Naive thymus-derived CD4-positive, alpha-beta T cell (primary cell): ENCODE measurements at regions of chr5 and their contacts with region 1.

Region 1: GRCh38 chr5:134113902-134114875 is at the start of gene TCF7:
- DNase-seq: peak; percentile 69 to 87 (median 83)
- ATAC-seq: peak; percentile 89
- H3K4me3 ChIP-seq: peak within 1 kb of the TSS; percentile 93
- H3K4me3 Mint-ChIP-seq: peak within 1 kb of the TSS; percentile 93 to 100 (median 98)
- H3K27ac ChIP-seq: peak within 1 kb of the TSS; percentile 97
- H3K27ac Mint-ChIP-seq: peak within 1 kb of the TSS; percentile 88 to 99 (median 98)
- H3K4me1 ChIP-seq: peaks cover 34 to 63% of the 10 kb centered on the region in 2 donors
- H3K4me1 Mint-ChIP-seq: peaks cover 27 to 67% (median 31%) of the 10 kb centered on the region in 7 donors
- H3K27me3 ChIP-seq: no peaks in the 10 kb centered on the region
- H3K27me3 Mint-ChIP-seq: peaks cover 0 to 43% (median 0%) of the 10 kb centered on the region in 5 donors
- total RNA-seq, gene TCF7: 203 to 1,066 (median 643) TPM

Region 2: DNA sequence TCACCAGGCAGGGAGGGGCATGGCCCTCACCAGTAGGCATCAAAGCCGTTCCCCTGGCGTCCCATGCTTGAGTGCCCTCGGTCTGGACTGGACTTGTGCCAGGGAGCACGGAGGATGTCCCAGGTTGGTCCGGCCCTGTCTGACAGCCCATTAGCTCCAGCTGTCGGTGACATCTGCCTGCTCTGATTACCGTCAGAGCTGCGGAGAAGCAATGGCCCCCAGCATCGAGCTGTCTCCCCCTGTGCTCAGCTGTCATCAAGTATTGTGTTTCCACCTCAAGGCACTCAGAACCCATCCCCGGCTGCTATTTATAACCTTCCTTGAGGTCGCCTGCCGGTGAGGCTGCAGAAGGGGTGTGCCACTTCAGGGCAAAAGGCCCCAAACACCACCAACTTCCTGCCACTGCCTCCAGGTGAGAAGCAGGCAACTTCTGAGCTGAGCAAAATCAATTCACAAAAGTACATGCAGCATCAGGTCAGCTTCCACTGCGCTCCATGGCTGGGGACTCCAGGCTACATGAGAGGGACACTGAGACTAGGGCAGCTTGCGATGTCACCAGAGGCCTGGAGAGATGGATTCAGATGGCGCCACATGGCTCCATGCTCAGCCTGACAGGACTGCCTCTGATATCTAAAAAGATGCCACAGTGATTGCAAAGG is 288.4 kb before region 1 on chr5:
- CTCF ChIA-PET with region 1: no interaction called
- POLR2A ChIA-PET with region 1: no interaction called
- intact Hi-C with region 1: no loop called
- DNase-seq: peak in 7 of 9 donors; percentile 33 to 61 (median 54)
- ATAC-seq: peak; percentile 68
- H3K4me3 ChIP-seq: no peak overlapping the region
- H3K4me3 Mint-ChIP-seq: peak overlapping the region in 8 of 10 donors; percentile 36 to 81 (median 68)
- H3K27ac ChIP-seq: no peak overlapping the region
- H3K27ac Mint-ChIP-seq: peak overlapping the region; percentile 40 to 88 (median 72)
- H3K4me1 ChIP-seq: peaks cover 18 to 25% of the 10 kb centered on the region in 2 donors
- H3K4me1 Mint-ChIP-seq: peaks cover 16 to 53% (median 33%) of the 10 kb centered on the region in 7 donors
- H3K27me3 ChIP-seq: no peaks in the 10 kb centered on the region
- H3K27me3 Mint-ChIP-seq: peaks cover 0 to 7% (median 0%) of the 10 kb centered on the region in 5 donors

Region 3: DNA sequence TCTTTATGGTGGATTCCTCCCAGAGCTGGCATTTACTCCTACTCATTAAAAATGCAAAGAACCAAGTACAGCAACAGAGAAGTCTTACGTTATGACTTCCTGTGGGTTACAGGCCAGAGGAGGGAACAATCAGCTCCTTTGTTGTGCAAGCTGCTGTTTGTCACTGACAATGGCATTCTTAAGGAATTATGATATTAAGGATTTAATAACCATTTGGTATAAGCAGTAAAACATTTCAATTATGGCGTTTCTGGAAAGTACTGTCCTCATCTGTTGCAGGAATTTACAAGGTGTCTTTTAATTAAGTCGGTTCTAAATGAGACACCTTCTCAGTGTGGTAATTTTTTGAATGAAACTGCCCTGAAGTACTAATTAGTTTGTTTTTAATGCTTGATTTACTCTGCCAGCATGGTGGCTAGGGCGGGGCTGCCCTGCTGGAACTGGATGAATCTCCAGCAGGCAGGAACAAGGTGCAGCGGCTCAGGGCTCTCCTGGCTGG is 60.3 kb before region 1 on chr5:
- CTCF ChIA-PET with region 1: interaction called, 5 read pairs
- POLR2A ChIA-PET with region 1: interaction called, 1,333 read pairs
- intact Hi-C with region 1: no loop called
- DNase-seq: peak in 5 of 9 donors; percentile 25 to 42 (median 36)
- ATAC-seq: peak; percentile 78
- H3K4me3 ChIP-seq: no peak overlapping the region
- H3K4me3 Mint-ChIP-seq: peak overlapping the region; percentile 52 to 88 (median 74)
- H3K27ac ChIP-seq: peak overlapping the region; percentile 58
- H3K27ac Mint-ChIP-seq: peak overlapping the region; percentile 72 to 97 (median 90)
- H3K4me1 ChIP-seq: peaks cover 7 to 50% of the 10 kb centered on the region in 2 donors
- H3K4me1 Mint-ChIP-seq: peaks cover 24 to 61% (median 46%) of the 10 kb centered on the region in 7 donors
- H3K27me3 ChIP-seq: no peaks in the 10 kb centered on the region
- H3K27me3 Mint-ChIP-seq: no peaks in the 10 kb centered on the region

Region 4: GRCh38 chr5:134086943-134087305 is 27.3 kb before region 1 on chr5:
- CTCF ChIA-PET with region 1: interaction called, 6 read pairs
- POLR2A ChIA-PET with region 1: no interaction called
- intact Hi-C with region 1: loop called (anchors 1 kb)
- DNase-seq: peak; percentile 45 to 96 (median 93)
- ATAC-seq: peak; percentile 87
- H3K4me3 ChIP-seq: peak overlapping the region; percentile 32
- H3K4me3 Mint-ChIP-seq: peak overlapping the region; percentile 74 to 87 (median 82)
- H3K27ac ChIP-seq: peak overlapping the region; percentile 66
- H3K27ac Mint-ChIP-seq: peak overlapping the region; percentile 81 to 99 (median 96)
- H3K4me1 ChIP-seq: peaks cover 59 to 87% of the 10 kb centered on the region in 2 donors
- H3K4me1 Mint-ChIP-seq: peaks cover 47 to 98% (median 85%) of the 10 kb centered on the region in 7 donors
- H3K27me3 ChIP-seq: no peaks in the 10 kb centered on the region
- H3K27me3 Mint-ChIP-seq: peaks cover 0 to 24% (median 0%) of the 10 kb centered on the region in 5 donors

Region 5: DNA sequence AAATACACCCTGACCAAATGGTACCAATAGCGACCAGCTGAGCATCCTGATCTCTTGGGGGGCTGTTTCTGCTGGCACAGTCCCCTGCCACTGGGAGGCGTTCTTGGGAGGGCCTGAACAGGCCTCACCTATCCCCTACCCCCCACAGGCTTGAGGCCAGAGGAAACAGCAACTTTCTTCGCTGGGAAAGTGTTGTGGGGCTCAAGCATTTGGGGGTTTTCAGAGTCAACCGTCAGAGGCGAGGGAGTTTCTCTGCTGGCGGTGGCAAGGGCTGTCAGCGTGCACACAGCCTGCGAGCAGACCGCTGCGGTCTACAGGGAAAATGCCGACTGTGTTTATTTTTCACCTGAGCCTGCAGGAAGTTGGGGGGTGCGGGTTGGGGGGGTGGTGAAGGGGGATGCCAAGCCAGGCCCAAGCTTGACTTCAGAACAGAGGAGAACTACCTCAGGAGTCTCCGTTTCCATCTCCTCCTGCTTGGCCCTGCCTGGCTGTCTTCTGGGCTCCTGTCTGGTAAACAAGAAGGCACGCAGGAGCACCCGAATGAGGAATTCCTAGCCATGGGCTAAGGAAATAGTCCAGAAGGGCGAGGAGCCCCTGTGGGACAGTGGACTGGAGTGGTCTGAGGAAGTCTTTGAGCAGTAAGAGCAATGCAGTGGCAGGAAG is 18.3 kb after region 1 on chr5:
- CTCF ChIA-PET with region 1: interaction called, 394 read pairs
- POLR2A ChIA-PET with region 1: no interaction called
- intact Hi-C with region 1: loop called (anchors 1 kb)
- DNase-seq: peak; percentile 52 to 94 (median 87)
- ATAC-seq: peak; percentile 87
- H3K4me3 ChIP-seq: peak overlapping the region; percentile 86
- H3K4me3 Mint-ChIP-seq: peak overlapping the region; percentile 93 to 100 (median 98)
- H3K27ac ChIP-seq: peak overlapping the region; percentile 97
- H3K27ac Mint-ChIP-seq: peak overlapping the region; percentile 90 to 99 (median 98)
- H3K4me1 ChIP-seq: peaks cover 92 to 97% of the 10 kb centered on the region in 2 donors
- H3K4me1 Mint-ChIP-seq: peaks cover 57 to 100% (median 90%) of the 10 kb centered on the region in 7 donors
- H3K27me3 ChIP-seq: no peaks in the 10 kb centered on the region
- H3K27me3 Mint-ChIP-seq: peaks cover 0 to 2% (median 0%) of the 10 kb centered on the region in 5 donors

Region 6: GRCh38 chr5:134145779-134146581 is 31.8 kb after region 1 on chr5:
- CTCF ChIA-PET with region 1: interaction called, 394 read pairs
- POLR2A ChIA-PET with region 1: no interaction called
- intact Hi-C with region 1: loop called in 1 of 2 experiments (anchors 1 kb)
- DNase-seq: peak; percentile 64 to 87 (median 77)
- ATAC-seq: peak; percentile 84
- H3K4me3 ChIP-seq: no peak overlapping the region
- H3K4me3 Mint-ChIP-seq: peak overlapping the region in 4 of 10 donors; percentile 18 to 54 (median 27)
- H3K27ac ChIP-seq: peak overlapping the region; percentile 63
- H3K27ac Mint-ChIP-seq: peak overlapping the region in 8 of 9 donors; percentile 75 to 93 (median 90)
- H3K4me1 ChIP-seq: peaks cover 5 to 29% of the 10 kb centered on the region in 2 donors
- H3K4me1 Mint-ChIP-seq: peaks cover 21 to 67% (median 46%) of the 10 kb centered on the region in 7 donors
- H3K27me3 ChIP-seq: no peaks in the 10 kb centered on the region
- H3K27me3 Mint-ChIP-seq: no peaks in the 10 kb centered on the region